ENCODE measurements at regions of chr9 and their contacts with region 1.

Region 1: DNA sequence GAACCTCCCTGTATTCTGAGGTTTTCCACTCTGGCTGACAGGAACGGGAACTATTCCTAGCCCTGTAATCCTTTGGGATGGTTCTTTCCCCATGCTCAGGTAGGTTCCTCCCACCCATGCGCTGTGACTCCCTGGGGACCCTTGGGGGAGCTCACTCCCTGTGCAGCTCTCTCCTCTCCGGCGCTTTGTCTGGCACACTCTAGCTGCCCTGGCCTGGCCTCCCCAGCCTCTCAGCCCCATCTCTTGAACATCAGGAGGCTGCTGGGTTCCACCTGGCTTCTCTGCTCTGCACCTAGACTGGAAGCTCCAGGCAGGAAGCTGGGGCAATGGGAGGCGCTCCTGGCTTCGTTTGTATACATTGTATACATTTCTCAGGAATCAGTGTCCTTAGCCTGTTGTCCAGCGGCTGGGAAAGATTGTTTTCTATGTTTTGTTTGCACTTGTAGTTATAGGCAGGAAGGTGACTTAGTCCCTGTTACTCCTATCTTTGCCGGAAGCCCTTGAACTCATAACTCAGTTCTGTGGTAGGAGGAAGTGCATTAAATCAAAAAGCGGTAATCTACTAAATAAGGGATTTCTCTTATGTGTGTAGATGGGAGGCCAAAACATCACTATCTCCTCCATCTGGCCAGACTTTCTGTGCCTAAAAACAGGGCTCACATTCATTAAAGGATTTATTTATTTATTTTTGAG is 20.4 kb downstream of the SLC25A25 start:
- DNase-seq: no peak
- H3K4me3 ChIP-seq: no peak overlapping the region
- CTCF ChIP-seq: no peak

Region 2: GRCh38 chr9:128067876-128068613 is 20.4 kb before region 1 on chr9 and contains the start of gene SLC25A25:
- CTCF ChIA-PET with region 1: interaction called, 28 read pairs
- POLR2A ChIA-PET with region 1: no interaction called
- DNase-seq: peak; percentile 92
- H3K4me3 ChIP-seq: peak within 1 kb of the TSS; percentile 80
- CTCF ChIP-seq: no peak